Natural killer cell (primary cell): ENCODE measurements at regions of chr11 and their contacts with region 1.

Region 1: DNA sequence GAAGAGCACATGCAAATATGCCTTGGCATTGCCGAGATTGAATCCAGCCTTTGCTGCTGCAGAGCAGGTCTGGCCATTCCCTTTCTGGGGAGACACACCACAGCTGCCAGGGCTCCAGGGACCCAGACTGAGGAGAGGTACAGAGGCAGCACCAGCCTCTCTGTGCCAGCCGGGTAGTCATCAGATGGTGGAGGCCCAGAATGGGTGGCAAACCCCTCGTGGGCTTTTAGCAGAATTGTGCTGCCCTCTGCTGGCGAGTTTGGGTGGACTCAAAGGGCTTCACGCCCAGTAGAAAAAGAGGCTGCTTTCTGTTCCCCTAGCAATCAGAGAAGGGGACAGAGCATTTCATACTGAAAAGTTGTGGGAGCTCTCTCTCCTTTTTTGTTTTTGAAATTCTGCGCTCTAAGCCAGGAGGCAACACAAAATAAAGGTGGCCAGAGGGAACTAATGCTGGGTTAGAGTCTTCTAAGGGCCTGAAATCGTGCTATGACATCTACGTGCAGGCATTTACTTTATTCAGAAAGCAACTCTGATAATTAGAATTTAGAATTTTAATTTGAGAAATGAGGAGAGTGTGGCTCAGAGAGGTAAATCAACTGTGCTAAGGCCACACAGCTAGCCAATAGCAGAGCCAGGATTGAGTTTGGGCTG is 158.8 kb upstream of the NAV2 start:
- DNase-seq: peak; percentile 66 to 78
- ATAC-seq: peak; percentile 62 to 76 (median 69)
- H3K4me3 ChIP-seq: no peak overlapping the region
- H3K4me3 Mint-ChIP-seq: no peak overlapping the region
- H3K27ac ChIP-seq: no peak overlapping the region
- H3K27ac Mint-ChIP-seq: no peak overlapping the region
- H3K4me1 ChIP-seq: no peaks in the 10 kb centered on the region
- H3K4me1 Mint-ChIP-seq: no peaks in the 10 kb centered on the region
- H3K27me3 ChIP-seq: no peaks in the 10 kb centered on the region
- H3K27me3 Mint-ChIP-seq: peaks cover 7 to 9% of the 10 kb centered on the region in 2 donors
- CTCF ChIP-seq: peak; percentile 82

Region 2: DNA sequence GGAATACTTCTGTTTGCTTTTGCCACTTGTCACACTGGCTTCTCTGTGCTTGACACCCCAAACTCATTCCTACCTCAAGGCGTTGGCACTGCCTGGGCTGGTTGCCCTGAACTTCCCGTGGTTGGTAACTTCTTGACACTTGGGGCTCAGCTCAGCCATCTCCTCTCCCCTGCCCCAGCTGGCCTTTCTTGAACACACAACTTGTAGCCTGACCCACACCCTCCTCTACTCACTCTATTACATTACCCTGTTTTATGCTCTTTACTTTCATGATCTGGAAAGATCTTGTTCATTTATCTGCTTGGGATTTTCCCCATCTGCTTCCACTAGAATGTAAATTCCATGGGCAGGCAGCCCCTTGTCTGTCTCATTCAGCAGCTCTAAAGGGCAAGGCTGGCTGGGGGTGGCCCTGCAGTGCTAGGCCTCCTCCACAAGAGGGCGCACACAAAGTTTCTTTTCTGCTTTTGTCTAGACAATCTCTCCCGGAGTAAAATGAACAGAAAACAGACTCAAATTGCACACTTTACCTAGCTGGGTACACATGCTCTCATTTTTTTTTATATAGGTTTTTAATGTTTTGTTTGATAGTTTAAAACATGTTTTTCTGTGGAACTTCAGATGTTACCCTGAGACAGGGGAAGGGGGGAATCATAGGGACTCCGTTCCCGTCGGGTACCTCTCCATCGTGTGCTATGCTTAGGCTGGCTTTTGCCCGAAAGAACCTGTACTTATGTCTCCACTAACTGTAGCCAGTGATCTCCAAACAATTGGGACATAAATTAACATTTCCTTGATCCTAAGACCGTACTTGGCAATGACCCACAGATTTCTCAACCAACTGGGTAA is 476.8 kb before region 1 on chr11:
- intact Hi-C with region 1: loop called (anchors 1 kb)
- DNase-seq: peak; percentile 53 to 71
- ATAC-seq: peak; percentile 79 to 94 (median 91)
- H3K4me3 ChIP-seq: no peak overlapping the region
- H3K4me3 Mint-ChIP-seq: no peak overlapping the region
- H3K27ac ChIP-seq: no peak overlapping the region
- H3K27ac Mint-ChIP-seq: no peak overlapping the region
- H3K4me1 ChIP-seq: no peaks in the 10 kb centered on the region
- H3K4me1 Mint-ChIP-seq: peaks cover 5 to 8% of the 10 kb centered on the region in 2 donors
- H3K27me3 ChIP-seq: peaks cover 3% of the 10 kb centered on the region
- H3K27me3 Mint-ChIP-seq: peaks cover 11 to 30% of the 10 kb centered on the region in 2 donors
- CTCF ChIP-seq: peak; percentile 99

Region 3: GRCh38 chr11:19259487-19260345 is 294.1 kb before region 1 on chr11:
- intact Hi-C with region 1: loop called (anchors 1 kb)
- DNase-seq: peak; percentile 58 to 76
- ATAC-seq: peak; percentile 87 to 99 (median 97)
- H3K4me3 ChIP-seq: no peak overlapping the region
- H3K4me3 Mint-ChIP-seq: no peak overlapping the region
- H3K27ac ChIP-seq: no peak overlapping the region
- H3K27ac Mint-ChIP-seq: no peak overlapping the region
- H3K4me1 ChIP-seq: no peaks in the 10 kb centered on the region
- H3K4me1 Mint-ChIP-seq: peaks cover 0 to 7% of the 10 kb centered on the region in 2 donors
- H3K27me3 ChIP-seq: no peaks in the 10 kb centered on the region
- H3K27me3 Mint-ChIP-seq: peaks cover 0 to 6% of the 10 kb centered on the region in 2 donors
- CTCF ChIP-seq: peak; percentile 98

Region 4: GRCh38 chr11:19594326-19594725 is 40.5 kb after region 1 on chr11:
- intact Hi-C with region 1: no loop called
- DNase-seq: no peak
- ATAC-seq: no peak
- H3K4me3 ChIP-seq: no peak overlapping the region
- H3K4me3 Mint-ChIP-seq: no peak overlapping the region
- H3K27ac ChIP-seq: no peak overlapping the region
- H3K27ac Mint-ChIP-seq: no peak overlapping the region
- H3K4me1 ChIP-seq: no peaks in the 10 kb centered on the region
- H3K4me1 Mint-ChIP-seq: no peaks in the 10 kb centered on the region
- H3K27me3 ChIP-seq: no peaks in the 10 kb centered on the region
- H3K27me3 Mint-ChIP-seq: peaks cover 9 to 17% of the 10 kb centered on the region in 2 donors
- CTCF ChIP-seq: no peak

Region 5: GRCh38 chr11:19903620-19904069 is 349.8 kb after region 1 on chr11:
- intact Hi-C with region 1: loop called (anchors 2 kb)
- DNase-seq: peak in 1 of 2 donors; percentile 55
- ATAC-seq: no peak
- H3K4me3 ChIP-seq: no peak overlapping the region
- H3K4me3 Mint-ChIP-seq: no peak overlapping the region
- H3K27ac ChIP-seq: no peak overlapping the region
- H3K27ac Mint-ChIP-seq: no peak overlapping the region
- H3K4me1 ChIP-seq: no peaks in the 10 kb centered on the region
- H3K4me1 Mint-ChIP-seq: no peaks in the 10 kb centered on the region
- H3K27me3 ChIP-seq: no peaks in the 10 kb centered on the region
- H3K27me3 Mint-ChIP-seq: no peaks in the 10 kb centered on the region
- CTCF ChIP-seq: peak; percentile 24